Activated T-helper 1 cell treated with anti-CD3 and anti-CD28 coated beads, Interleukin-12 subunit alpha, Interleukin-12 subunit beta, Interleukin-2, Interleukin-4 antibody, amounts not matched to agents 30 ng/mL and 10 ng/mL and 1 ng/mL, durations not matched to agents 14 hours and 24 hours and 36 hours (primary cell): ENCODE measurements at regions of chr18 and their contacts with region 1.

Region 1: GRCh38 chr18:9861157-9861556 is 24.6 kb upstream of the TXNDC2 start:
- DNase-seq: no peak
- H3K4me3 Mint-ChIP-seq: no peak overlapping the region
- H3K27ac Mint-ChIP-seq: no peak overlapping the region
- H3K4me1 Mint-ChIP-seq: peaks cover 7% of the 10 kb centered on the region
- H3K27me3 Mint-ChIP-seq: peaks cover 2% of the 10 kb centered on the region

Region 2: GRCh38 chr18:9673296-9674251 is 187.6 kb before region 1 on chr18:
- intact Hi-C with region 1: loop called (anchors 2 kb)
- DNase-seq: peak; percentile 7
- H3K4me3 Mint-ChIP-seq: no peak overlapping the region
- H3K27ac Mint-ChIP-seq: no peak overlapping the region
- H3K4me1 Mint-ChIP-seq: peaks cover 7% of the 10 kb centered on the region
- H3K27me3 Mint-ChIP-seq: peaks cover 18% of the 10 kb centered on the region

Region 3: DNA sequence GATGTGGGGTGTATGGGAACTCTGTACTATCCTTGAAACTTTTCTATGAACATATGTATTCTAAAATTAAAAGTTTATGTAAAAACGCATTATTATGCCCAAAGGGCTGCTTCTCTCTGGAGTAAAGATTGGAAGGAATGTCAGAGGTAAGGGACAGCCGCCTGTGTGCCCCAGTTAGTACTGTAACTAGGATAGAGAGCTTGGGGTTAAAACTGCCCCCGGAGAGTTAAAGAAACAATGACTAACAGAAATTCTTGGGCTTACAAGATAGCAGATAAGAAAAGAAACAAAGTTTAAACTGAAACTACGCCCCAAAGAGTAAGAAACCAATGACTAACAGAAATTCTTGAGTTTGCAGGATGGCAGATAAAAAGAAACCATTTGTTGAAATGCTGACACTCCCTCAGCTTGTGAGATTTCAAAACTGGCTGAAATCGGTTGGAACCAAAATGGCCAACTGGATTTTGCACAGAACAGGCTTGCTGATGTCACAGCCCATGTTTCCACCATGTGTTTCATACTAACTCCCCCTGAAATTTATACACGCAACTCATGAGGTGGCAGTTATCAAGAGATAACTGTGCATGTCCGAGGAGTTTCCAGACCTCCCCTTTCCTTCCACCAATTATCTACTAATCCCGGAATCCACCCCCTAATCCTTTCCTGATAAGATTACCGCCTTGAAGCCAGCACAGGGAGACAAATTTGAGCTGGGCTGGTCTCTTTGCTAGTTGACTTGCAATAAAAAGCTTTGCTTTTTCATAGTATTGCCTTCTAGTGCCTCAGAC is 15.9 kb after region 1 on chr18:
- intact Hi-C with region 1: loop called (anchors 1 kb)
- DNase-seq: no peak
- H3K4me3 Mint-ChIP-seq: no peak overlapping the region
- H3K27ac Mint-ChIP-seq: no peak overlapping the region
- H3K4me1 Mint-ChIP-seq: peaks cover 12% of the 10 kb centered on the region
- H3K27me3 Mint-ChIP-seq: peaks cover 5% of the 10 kb centered on the region